ENCODE measurements at regions of chr2 and their contacts with region 1.

Region 1: GRCh38 chr2:231674587-231675338 is 33.6 kb upstream of the PTMA start:
- DNase-seq: peak; percentile 93
- ATAC-seq: peak; percentile 58
- H3K4me3 Mint-ChIP-seq: no peak overlapping the region
- H3K27ac Mint-ChIP-seq: peak overlapping the region; percentile 94
- H3K4me1 Mint-ChIP-seq: peaks cover 49% of the 10 kb centered on the region
- H3K27me3 Mint-ChIP-seq: no peaks in the 10 kb centered on the region
- CTCF ChIP-seq: peak; percentile 56

Region 2: DNA sequence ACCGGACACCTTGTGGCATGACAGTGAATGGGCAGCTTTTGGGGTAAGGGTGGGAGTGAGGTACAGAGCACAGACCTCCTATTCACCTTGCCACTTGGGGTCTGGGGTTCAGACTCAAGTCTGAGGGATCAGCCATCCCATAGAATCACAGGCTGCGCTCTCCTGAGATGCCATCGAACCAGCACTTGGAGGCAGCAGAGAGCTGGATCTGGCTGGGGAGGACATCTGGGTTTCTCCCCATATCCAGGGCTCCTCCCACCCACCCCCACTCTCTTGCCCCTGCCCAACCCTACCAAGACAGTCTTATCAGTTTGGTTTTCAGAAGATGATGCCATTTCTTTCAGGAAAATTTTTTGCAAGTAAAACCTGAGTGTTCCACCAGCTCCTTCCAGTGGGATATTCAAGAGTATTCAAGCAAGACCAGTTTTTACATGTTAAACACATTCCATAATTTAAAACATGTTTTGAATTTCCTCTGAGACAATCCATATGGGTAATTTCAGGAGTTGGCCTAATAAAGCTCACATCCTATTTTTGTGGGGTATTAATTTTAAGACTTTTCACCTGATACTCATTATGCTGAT is 111.3 kb before region 1 on chr2:
- CTCF ChIA-PET with region 1: interaction called, 24 read pairs
- POLR2A ChIA-PET with region 1: interaction called, 5 read pairs
- DNase-seq: peak; percentile 82
- ATAC-seq: peak; percentile 99
- H3K4me3 Mint-ChIP-seq: no peak overlapping the region
- H3K27ac Mint-ChIP-seq: peak overlapping the region; percentile 66; the same call in 1 of the 2 replicates
- H3K4me1 Mint-ChIP-seq: peaks cover 11% of the 10 kb centered on the region
- H3K27me3 Mint-ChIP-seq: no peaks in the 10 kb centered on the region
- CTCF ChIP-seq: peak; percentile 54; the same call in 1 of the 2 replicates

Region 3: GRCh38 chr2:231621129-231621879 is 53.5 kb before region 1 on chr2:
- CTCF ChIA-PET with region 1: interaction called, 236 read pairs
- POLR2A ChIA-PET with region 1: interaction called, 15 read pairs
- DNase-seq: peak; percentile 55
- ATAC-seq: peak; percentile 79
- H3K4me3 Mint-ChIP-seq: peak overlapping the region; percentile 17
- H3K27ac Mint-ChIP-seq: peak overlapping the region; percentile 88
- H3K4me1 Mint-ChIP-seq: peaks cover 54% of the 10 kb centered on the region
- H3K27me3 Mint-ChIP-seq: no peaks in the 10 kb centered on the region
- CTCF ChIP-seq: no peak

Region 4: GRCh38 chr2:231642631-231643494 is 31.9 kb before region 1 on chr2:
- CTCF ChIA-PET with region 1: interaction called, 48 read pairs
- POLR2A ChIA-PET with region 1: no interaction called
- DNase-seq: peak; percentile 19
- ATAC-seq: peak; percentile 15; the same call in 1 of the 2 replicates
- H3K4me3 Mint-ChIP-seq: no peak overlapping the region
- H3K27ac Mint-ChIP-seq: peak overlapping the region; percentile 16; the same call in 1 of the 2 replicates
- H3K4me1 Mint-ChIP-seq: peaks cover 29% of the 10 kb centered on the region
- H3K27me3 Mint-ChIP-seq: 0 out of 2 replicates have a peak, but pooled peaks cover 3% of the 10 kb centered on the region
- CTCF ChIP-seq: no peak

Region 5: GRCh38 chr2:231662028-231662810 is 12.5 kb before region 1 on chr2:
- CTCF ChIA-PET with region 1: interaction called, 46 read pairs
- POLR2A ChIA-PET with region 1: interaction called, 17 read pairs
- DNase-seq: peak; percentile 98
- ATAC-seq: peak; percentile 67
- H3K4me3 Mint-ChIP-seq: peak overlapping the region; percentile 60
- H3K27ac Mint-ChIP-seq: peak overlapping the region; percentile 94
- H3K4me1 Mint-ChIP-seq: peaks cover 44% of the 10 kb centered on the region
- H3K27me3 Mint-ChIP-seq: peaks cover 20% of the 10 kb centered on the region
- CTCF ChIP-seq: no peak

Region 6: GRCh38 chr2:231706731-231707624 is 32.2 kb after region 1 on chr2:
- CTCF ChIA-PET with region 1: interaction called, 260 read pairs
- POLR2A ChIA-PET with region 1: interaction called, 72 read pairs
- DNase-seq: peak; percentile 98
- ATAC-seq: peak; percentile 58
- H3K4me3 Mint-ChIP-seq: peak overlapping the region; percentile 88
- H3K27ac Mint-ChIP-seq: peak overlapping the region; percentile 100
- H3K4me1 Mint-ChIP-seq: peaks cover 19% of the 10 kb centered on the region
- H3K27me3 Mint-ChIP-seq: peaks cover 5% of the 10 kb centered on the region; the same call in 1 of the 2 replicates
- CTCF ChIP-seq: peak; percentile 73

Region 7: GRCh38 chr2:231786177-231786916 is 111.6 kb after region 1 on chr2 and contains the start of gene COPS7B:
- CTCF ChIA-PET with region 1: interaction called, 10 read pairs
- POLR2A ChIA-PET with region 1: interaction called, 5 read pairs
- DNase-seq: peak; percentile 91
- ATAC-seq: peak; percentile 82
- H3K4me3 Mint-ChIP-seq: peak within 1 kb of the TSS; percentile 95
- H3K27ac Mint-ChIP-seq: peak within 1 kb of the TSS; percentile 99
- H3K4me1 Mint-ChIP-seq: peaks cover 30% of the 10 kb centered on the region
- H3K27me3 Mint-ChIP-seq: no peaks in the 10 kb centered on the region
- CTCF ChIP-seq: peak; percentile 25; the same call in 1 of the 2 replicates
- total RNA-seq, gene COPS7B: 56.5 to 63.8 TPM (median 57.1 TPM) in 3 replicates